ENCODE measurements at regions of chr9 and their contacts with region 1.

Region 1: DNA sequence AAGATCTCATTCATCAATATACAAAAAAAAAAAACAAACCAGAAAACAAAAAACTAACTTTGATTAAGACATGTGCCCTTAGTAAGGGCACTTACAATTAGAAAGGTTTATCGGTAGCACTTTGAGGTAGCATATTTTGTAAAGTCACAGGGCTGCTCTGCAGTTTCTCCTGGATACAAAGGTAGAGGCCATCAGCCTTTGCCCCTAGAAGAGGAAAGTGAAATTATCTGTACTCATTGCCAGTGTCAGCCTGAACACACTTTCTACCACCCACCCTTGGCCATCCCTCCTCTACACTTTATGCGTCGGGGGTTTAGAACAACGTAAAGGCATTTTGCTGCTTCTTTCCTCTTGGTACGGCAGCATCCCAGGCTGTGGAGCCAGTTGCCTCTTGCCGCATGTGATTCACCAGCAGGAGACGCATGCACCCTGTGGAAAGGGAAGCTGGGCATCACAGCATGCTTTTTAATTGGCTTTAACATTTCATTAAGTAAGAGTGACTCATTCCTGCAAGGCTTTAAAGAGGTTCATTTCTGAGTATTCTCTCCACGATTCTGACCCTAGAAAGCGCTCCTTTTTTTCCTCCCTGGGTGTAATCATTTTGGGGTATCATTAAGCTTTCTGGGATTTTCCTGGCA is 84.6 kb downstream of the CEMIP2 start:
- DNase-seq: peak; percentile 83
- H3K4me3 ChIP-seq: no peak overlapping the region
- H3K27ac ChIP-seq: peak overlapping the region; percentile 54
- H3K4me1 ChIP-seq: peaks cover 62% of the 10 kb centered on the region
- H3K27me3 ChIP-seq: no peaks in the 10 kb centered on the region
- CTCF ChIP-seq: peak; percentile 67 to 85

Region 2: DNA sequence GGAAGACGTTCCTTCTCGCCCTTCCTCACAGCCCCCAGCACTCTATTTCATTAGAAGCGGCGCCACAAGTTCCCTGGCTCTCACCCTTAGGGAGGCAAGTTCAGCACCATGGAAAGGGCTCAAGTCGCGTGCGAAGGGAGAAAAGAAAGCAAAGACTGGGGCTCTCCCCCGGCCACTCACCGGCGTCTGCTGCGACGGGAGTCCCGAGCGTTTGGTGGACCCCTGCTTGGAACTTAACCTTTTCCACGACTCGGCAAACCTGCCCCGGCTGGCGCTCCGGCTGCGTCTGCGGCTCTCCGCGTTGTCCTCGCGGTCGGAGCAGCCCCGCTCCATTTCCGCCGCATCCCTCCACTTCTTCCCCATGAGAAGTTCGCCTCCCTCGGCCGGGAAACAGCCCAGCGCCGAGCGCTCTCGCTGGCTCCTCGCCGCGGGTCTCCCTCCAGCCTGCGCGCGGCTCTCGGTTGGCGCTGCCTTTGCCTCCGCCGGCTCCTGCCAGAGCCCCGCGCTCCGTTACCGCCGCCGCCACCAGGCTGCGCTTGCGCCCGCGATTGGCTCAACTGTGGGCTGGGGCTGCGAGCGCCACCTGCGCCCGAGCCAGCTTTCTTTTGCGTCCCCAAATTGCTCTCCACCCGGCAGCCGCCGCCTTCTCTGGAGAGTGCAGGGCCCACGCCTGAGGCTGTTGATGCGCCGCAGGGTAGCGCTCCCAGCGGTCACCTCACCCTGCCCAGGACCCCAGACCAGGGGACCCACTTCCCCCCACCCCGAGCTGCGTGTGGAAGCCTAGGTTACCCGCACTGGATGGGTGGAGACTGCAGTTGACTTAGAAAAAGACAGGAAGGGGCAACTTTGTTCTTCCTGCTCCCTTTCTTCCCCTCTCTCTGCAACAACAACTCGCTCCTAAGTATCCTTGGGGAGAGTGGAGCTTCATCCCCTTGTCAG is 237.0 kb before region 1 on chr9:
- CTCF ChIA-PET with region 1: no interaction called
- dilution Hi-C with region 1: no loop called
- in situ Hi-C with region 1: no loop called
- intact Hi-C with region 1: loop called (anchors 10 kb)
- DNase-seq: peak; percentile 68
- H3K4me3 ChIP-seq: peak overlapping the region; percentile 49 to 57 (median 51)
- H3K27ac ChIP-seq: no peak overlapping the region
- H3K4me1 ChIP-seq: peaks cover 7% of the 10 kb centered on the region
- H3K27me3 ChIP-seq: peaks cover 12% of the 10 kb centered on the region
- CTCF ChIP-seq: peak; percentile 14 to 30

Region 3: GRCh38 chr9:71483436-71483835 is 200.3 kb before region 1 on chr9:
- CTCF ChIA-PET with region 1: no interaction called
- dilution Hi-C with region 1: no loop called
- in situ Hi-C with region 1: no loop called
- intact Hi-C with region 1: no loop called
- DNase-seq: no peak
- H3K4me3 ChIP-seq: no peak overlapping the region
- H3K27ac ChIP-seq: no peak overlapping the region
- H3K4me1 ChIP-seq: no peaks in the 10 kb centered on the region
- H3K27me3 ChIP-seq: no peaks in the 10 kb centered on the region
- CTCF ChIP-seq: no peak

Region 4: GRCh38 chr9:71604197-71605063 is 79.3 kb before region 1 on chr9:
- CTCF ChIA-PET with region 1: no interaction called
- dilution Hi-C with region 1: no loop called
- in situ Hi-C with region 1: no loop called
- intact Hi-C with region 1: loop called (anchors 1 kb)
- DNase-seq: peak; percentile 45
- H3K4me3 ChIP-seq: no peak overlapping the region
- H3K27ac ChIP-seq: no peak overlapping the region
- H3K4me1 ChIP-seq: peaks cover 6% of the 10 kb centered on the region
- H3K27me3 ChIP-seq: no peaks in the 10 kb centered on the region
- CTCF ChIP-seq: peak; percentile 71 to 83

Region 5: GRCh38 chr9:71647094-71647591 is 36.6 kb before region 1 on chr9:
- CTCF ChIA-PET with region 1: no interaction called
- dilution Hi-C with region 1: no loop called
- in situ Hi-C with region 1: no loop called
- intact Hi-C with region 1: no loop called
- DNase-seq: peak; percentile 76
- H3K4me3 ChIP-seq: no peak overlapping the region
- H3K27ac ChIP-seq: no peak overlapping the region
- H3K4me1 ChIP-seq: peaks cover 13% of the 10 kb centered on the region
- H3K27me3 ChIP-seq: no peaks in the 10 kb centered on the region
- CTCF ChIP-seq: no peak

Region 6: GRCh38 chr9:71716138-71716909 is 32.6 kb after region 1 on chr9:
- CTCF ChIA-PET with region 1: no interaction called
- dilution Hi-C with region 1: no loop called
- in situ Hi-C with region 1: no loop called
- intact Hi-C with region 1: loop called (anchors 5 kb)
- DNase-seq: no peak
- H3K4me3 ChIP-seq: no peak overlapping the region
- H3K27ac ChIP-seq: no peak overlapping the region
- H3K4me1 ChIP-seq: peaks cover 19% of the 10 kb centered on the region
- H3K27me3 ChIP-seq: no peaks in the 10 kb centered on the region
- CTCF ChIP-seq: peak; percentile 39 to 40

Region 7: DNA sequence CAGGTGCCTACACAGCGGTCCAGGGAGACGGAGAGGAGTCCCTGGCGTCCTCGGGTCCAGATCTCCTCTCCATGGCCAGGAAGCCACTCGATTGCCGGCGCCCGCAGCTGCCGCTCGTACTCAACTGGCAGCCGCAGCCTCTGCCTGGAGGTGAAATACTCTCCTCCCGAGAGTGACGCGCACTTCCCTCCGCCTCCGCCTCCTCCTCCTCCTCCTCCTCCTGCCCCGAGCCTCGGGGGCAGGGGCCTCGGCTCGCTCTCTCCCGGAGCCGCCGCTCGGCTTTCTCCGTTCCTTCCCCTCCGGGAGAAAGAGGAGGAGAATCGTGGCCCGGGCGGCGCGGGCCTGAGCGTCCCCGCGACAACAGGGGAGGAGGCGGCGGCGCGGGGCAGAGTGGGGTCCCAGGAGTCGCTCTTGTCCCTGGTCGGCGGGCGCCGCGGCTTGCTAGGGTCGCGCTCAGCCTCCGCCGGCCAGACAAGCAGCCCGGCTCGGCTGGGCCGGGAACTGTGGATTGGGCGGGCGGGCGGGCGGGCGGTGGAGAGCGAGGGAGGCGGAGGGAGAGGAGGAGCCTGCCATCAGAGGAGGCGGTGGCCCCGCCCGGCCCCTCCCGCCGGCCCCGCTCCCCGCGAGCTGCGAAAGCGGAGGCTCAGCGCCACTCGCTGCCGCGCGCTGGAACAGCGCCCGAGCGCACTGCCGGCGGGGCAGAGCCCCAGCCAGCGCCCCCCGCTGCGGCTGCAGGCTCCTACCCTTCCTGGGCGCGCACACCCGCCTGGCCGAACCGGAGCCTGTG is 84.9 kb after region 1 on chr9 and contains the start of gene CEMIP2:
- CTCF ChIA-PET with region 1: no interaction called
- dilution Hi-C with region 1: no loop called
- in situ Hi-C with region 1: no loop called
- intact Hi-C with region 1: loop called (anchors 1 kb)
- DNase-seq: peak; percentile 94
- H3K4me3 ChIP-seq: peak within 1 kb of the TSS; percentile 76 to 86 (median 84)
- H3K27ac ChIP-seq: peak within 1 kb of the TSS; percentile 69
- H3K4me1 ChIP-seq: peaks cover 37% of the 10 kb centered on the region
- H3K27me3 ChIP-seq: no peaks in the 10 kb centered on the region
- CTCF ChIP-seq: peak; percentile 18 to 54
- total RNA-seq, gene CEMIP2: 76.4 to 398 TPM

Region 8: DNA sequence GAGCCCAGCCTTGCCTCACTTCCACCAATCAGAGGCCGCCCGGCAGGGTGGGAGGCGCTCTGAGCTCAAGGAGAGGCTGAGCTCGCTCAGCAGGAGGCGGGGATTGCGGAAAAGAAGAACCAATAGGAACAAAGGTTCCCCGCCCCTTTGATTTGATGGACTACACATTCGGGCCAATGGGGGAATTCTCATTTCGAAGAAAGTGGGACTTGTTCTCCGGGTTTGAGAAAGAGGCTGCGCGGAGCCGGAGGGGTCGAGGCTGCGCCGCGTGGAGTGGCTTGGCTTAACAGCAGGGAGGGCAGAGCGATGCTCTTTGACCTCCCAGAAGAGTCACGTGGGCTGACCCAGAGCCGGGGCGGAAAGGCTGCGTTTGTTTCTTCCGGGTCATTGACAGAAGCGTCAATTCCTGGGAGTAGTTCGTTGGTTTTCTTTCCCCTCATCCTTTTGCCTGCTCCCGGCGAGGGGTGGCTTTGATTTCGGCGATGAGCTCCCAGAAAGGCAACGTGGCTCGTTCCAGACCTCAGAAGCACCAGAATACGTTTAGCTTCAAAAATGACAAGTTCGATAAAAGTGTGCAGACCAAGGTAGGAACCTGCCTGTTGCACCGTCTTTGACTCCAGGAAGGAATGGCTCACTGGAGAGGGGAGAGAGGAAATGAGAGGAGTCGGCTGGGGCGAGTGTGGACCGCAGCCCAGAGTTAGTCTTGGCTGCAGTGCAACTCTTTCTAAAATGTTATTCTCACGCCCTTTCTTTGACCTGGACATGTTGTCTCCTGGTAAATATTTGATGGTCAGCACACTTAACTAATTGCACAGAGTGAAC is 227.7 kb after region 1 on chr9 and contains the start of gene C9orf85:
- CTCF ChIA-PET with region 1: no interaction called
- dilution Hi-C with region 1: no loop called
- in situ Hi-C with region 1: no loop called
- intact Hi-C with region 1: loop called (anchors 5 kb)
- DNase-seq: peak; percentile 100
- H3K4me3 ChIP-seq: peak within 1 kb of the TSS; percentile 79 to 84 (median 80)
- H3K27ac ChIP-seq: peak within 1 kb of the TSS; percentile 63
- H3K4me1 ChIP-seq: peaks cover 13% of the 10 kb centered on the region
- H3K27me3 ChIP-seq: no peaks in the 10 kb centered on the region
- CTCF ChIP-seq: no peak
- total RNA-seq, gene C9orf85: 13.7 to 20.4 TPM

Measured in mammary epithelial cell (primary cell).